ENCODE measurements at regions of chr3 and their contacts with region 1.

Region 1: GRCh38 chr3:141192345-141192744 is 39.3 kb upstream of the PXYLP1 start:
- DNase-seq: peak; percentile 99
- H3K4me3 Mint-ChIP-seq: no peak overlapping the region
- H3K27ac Mint-ChIP-seq: peak overlapping the region; percentile 42
- H3K4me1 Mint-ChIP-seq: peaks cover 17% of the 10 kb centered on the region
- H3K27me3 Mint-ChIP-seq: peaks cover 29% of the 10 kb centered on the region

Region 2: GRCh38 chr3:140898340-140899180 is 293.8 kb before region 1 on chr3:
- intact Hi-C with region 1: loop called (anchors 1 kb)
- DNase-seq: peak; percentile 77
- H3K4me3 Mint-ChIP-seq: no peak overlapping the region
- H3K27ac Mint-ChIP-seq: no peak overlapping the region
- H3K4me1 Mint-ChIP-seq: peaks cover 3% of the 10 kb centered on the region
- H3K27me3 Mint-ChIP-seq: peaks cover 21% of the 10 kb centered on the region

Region 3: DNA sequence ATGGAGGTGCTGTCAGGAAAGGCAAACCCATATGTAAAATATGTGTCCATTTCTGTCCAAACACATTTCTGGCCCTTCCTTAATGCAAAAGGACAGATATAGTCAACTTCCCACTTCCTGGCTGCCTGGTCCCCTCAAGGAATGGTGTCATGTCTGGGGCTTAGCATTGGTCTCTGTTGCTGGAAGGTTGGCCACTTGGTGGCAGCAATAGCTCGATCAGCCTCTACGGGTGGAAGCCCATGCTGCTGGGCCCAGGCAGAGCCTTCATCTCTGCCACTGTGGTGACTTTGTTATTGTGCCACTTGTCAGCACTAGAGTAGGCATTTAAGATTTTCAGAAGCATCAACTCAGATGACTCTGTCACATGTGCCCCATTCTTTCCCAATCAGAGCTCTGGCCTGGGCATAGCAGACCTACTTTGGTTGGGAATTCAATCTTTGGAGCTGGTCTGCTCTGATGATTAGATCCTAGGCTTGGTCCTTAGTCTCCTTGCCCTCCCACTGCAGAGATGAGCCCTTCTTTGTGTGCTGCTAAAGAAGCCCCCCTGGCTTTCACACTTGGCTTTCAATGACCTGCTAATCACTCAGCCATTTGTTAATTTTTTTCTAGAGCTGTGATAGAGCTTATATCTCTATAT is 192.2 kb before region 1 on chr3:
- intact Hi-C with region 1: loop called (anchors 1 kb)
- DNase-seq: peak; percentile 84
- H3K4me3 Mint-ChIP-seq: no peak overlapping the region
- H3K27ac Mint-ChIP-seq: no peak overlapping the region
- H3K4me1 Mint-ChIP-seq: peaks cover 5% of the 10 kb centered on the region
- H3K27me3 Mint-ChIP-seq: peaks cover 13% of the 10 kb centered on the region

Region 4: DNA sequence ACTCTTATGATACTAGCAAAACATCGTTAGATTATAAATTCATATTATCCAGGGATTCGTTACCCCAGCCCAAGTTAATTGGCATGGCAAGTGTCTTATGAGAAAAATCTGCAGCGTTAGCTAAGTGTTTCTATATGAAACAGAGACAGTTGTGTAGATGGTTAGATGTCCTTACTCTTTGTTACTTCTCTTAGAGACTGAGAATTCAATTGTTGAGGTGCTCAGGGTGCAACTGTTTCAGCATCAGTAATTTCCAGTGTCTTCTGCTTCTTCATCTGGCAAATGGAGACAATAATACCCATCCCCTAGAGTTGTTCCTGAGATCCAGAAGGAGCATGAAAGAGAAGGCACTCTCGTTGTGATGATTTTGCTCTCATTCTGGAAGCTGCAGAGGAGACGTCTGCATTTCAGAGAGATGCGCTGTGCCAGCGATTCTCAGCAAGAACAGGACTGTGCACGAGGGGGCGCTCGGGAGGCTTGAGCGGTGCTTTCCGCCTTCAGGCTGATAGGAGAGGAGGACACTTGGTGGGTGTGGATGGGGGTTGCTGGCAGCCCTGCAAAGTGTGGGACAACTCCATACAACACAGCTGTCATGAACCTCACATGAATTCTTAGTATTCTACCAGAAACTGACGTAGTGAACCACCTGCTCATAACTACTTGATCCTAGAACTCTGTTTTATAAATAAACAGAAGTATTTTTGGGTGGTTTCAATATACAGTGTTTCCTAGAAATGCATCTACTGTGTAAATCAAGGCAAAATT is 180.9 kb before region 1 on chr3:
- intact Hi-C with region 1: loop called (anchors 1 kb)
- DNase-seq: peak; percentile 94
- H3K4me3 Mint-ChIP-seq: no peak overlapping the region
- H3K27ac Mint-ChIP-seq: no peak overlapping the region
- H3K4me1 Mint-ChIP-seq: peaks cover 6% of the 10 kb centered on the region
- H3K27me3 Mint-ChIP-seq: peaks cover 35% of the 10 kb centered on the region

Region 5: DNA sequence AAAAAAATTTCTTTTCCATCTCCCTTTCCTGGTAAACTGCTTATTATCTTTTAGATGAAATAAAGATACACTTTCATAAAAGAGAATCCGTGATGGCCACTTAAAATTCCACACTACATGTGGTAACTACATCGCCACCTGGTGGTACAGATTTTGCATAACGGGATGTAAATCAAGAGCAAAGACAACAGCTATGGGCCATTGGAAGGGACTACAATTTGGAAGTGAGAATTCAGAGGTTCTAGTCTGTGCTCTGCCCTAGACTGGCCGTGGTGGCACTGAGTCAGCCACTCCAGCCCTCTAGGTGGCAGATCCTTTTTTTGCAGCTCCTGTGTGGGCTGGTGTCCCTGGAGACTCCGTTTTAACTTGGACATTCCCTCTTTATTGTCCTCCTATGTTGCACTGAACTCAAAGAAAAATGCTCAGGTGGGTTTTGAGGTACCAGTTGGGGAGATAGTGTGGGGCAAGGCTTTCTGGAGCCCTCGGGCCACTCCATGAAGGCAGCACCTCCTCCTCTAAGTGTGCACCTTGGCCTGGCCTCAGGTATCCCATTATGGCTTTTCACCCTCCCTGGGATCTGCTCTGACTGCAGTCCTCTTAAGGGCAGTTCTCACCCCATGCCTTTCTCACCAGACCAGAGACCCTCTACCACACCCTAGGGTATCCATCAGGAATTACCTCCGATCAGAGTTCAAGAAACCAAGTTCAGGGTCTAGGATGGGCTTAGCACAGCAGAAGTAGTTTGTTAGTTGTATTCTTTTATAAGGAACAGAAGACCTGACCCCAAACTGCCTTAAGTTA is 86.3 kb before region 1 on chr3:
- intact Hi-C with region 1: loop called (anchors 2 kb)
- DNase-seq: peak; percentile 89
- H3K4me3 Mint-ChIP-seq: no peak overlapping the region
- H3K27ac Mint-ChIP-seq: no peak overlapping the region
- H3K4me1 Mint-ChIP-seq: no peaks in the 10 kb centered on the region
- H3K27me3 Mint-ChIP-seq: no peaks in the 10 kb centered on the region

Region 6: DNA sequence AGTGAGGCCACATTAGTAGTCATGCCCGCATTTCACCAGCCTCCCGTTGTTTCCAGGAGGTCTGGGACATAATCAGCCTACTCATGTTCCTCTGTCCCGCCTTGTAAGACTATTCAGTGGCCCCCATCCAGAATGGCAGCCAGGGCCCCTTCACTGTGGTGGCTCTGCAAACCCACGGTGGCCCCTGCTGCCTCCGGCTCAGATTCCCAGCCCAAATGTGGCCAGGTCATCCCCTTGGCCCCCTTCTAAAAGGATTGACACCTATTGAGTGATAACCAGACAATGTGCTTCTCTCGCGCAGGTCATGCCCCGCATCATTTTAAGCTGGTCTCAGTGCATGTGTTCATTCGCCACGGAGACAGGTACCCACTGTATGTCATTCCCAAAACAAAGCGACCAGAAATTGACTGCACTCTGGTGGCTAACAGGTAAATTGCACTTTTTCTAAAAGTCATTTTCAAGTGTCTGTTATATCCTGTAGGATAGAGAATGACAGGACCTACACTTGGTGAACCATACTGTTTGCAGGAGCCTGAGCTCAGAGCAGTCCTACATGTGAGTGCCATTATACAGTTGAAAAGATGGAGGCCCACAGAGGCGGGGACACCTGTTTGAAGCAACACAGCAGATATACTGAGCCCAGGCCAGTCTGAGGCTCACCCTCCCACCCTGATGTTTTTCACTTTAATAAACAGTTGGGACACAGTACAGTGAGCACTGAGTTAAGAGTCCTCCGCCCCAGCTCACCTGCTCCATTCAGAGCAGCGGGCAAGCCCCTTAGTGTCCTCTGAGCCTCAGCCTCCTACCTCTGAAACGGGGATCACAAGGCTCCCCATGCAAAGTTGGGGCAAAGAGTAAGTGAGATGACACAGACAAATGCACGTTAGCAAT is 87.0 kb after region 1 on chr3:
- intact Hi-C with region 1: loop called (anchors 1 kb)
- DNase-seq: peak; percentile 75
- H3K4me3 Mint-ChIP-seq: no peak overlapping the region
- H3K27ac Mint-ChIP-seq: no peak overlapping the region
- H3K4me1 Mint-ChIP-seq: peaks cover 19% of the 10 kb centered on the region
- H3K27me3 Mint-ChIP-seq: no peaks in the 10 kb centered on the region